Common myeloid progenitor, CD34-positive (primary cell): ENCODE measurements at regions of chr1 and their contacts with region 1.

Region 1: GRCh38 chr1:109790735-109791494 is 27.2 kb upstream of the EPS8L3 start:
- DNase-seq: peak; percentile 94 to 99 (median 98)
- H3K4me3 ChIP-seq: peak overlapping the region in 3 of 7 experiments; percentile 23 to 43 (median 31)
- H3K27ac ChIP-seq: peak overlapping the region; percentile 64 to 95
- H3K4me1 ChIP-seq: peaks cover 23 to 93% (median 83%) of the 10 kb centered on the region in 4 experiments
- H3K27me3 ChIP-seq: no peaks in the 10 kb centered on the region

Region 2: DNA sequence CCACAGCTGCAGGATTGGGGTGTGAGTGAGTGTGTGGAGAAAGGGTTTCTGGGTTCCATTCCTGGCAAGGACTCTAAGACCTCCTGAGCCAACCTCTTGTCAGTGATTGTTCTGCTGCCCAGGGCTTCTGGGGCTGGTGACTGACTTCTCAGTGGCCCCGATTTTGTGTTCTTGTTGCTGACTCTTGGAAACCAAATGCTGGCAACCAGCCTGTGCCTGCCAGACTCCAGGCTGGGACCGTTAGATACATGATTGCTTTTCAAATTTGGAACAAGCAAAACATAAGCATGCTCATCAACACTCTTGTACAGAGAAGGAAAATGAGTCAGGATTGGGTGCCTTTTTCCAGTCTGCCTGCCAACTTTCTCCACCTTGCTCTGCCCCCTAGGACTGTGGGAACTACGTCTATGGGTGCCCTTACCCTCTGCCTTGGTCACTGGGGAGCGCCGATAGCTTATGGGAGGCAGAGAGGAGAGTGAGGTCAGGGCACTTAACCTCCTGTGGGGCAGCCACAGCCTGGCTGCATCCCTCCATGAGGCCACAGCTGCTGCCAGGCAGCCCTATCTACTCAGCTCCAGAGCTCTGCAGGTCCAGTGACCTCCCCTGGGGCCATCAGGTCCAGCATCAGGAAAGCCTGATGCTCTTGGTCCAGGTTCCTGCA is 12.1 kb after region 1 on chr1:
- CTCF ChIA-PET with region 1: interaction called, 37 read pairs
- POLR2A ChIA-PET with region 1: no interaction called
- DNase-seq: no peak
- H3K4me3 ChIP-seq: no peak overlapping the region
- H3K27ac ChIP-seq: no peak overlapping the region
- H3K4me1 ChIP-seq: peaks cover 2 to 48% (median 22%) of the 10 kb centered on the region in 4 experiments
- H3K27me3 ChIP-seq: no peaks in the 10 kb centered on the region

Region 3: DNA sequence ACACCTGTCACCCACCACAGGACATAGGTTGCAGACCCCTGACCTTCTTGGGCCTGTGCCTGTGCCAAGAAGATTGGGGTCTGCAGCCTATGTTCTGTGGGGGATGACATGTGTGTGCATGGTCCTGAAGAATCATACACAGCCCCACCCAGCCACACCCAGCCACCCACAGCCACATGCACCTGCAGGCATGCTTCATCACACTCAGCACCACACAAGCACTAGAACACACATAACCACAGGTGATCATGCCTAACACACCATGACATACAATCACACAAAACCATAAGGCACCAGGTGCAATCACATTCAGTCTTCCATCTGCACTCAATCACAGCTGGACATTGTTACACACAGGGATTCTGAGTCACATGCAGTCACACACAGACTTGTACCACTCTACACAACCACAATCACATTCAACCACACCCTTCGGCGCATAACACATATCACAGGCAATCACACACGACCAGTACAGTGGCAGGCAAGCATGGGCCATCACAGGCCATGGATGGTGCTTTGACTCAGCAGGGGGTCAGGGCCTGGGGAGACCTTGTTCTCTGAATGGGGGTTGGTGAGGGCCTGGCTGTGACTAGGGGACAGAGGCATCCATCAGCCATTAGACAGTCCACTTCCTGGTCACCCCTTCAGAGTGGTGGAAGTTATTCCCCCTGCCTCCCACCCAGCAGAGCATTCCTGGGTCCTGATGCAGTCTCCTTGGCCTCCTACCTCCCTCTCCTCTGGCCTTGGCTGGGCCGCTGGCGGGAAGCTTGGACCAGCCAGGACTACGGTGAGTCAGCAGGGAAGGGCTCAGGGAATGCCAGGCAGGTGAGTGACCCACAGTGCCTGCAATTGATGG is 17.1 kb after region 1 on chr1:
- CTCF ChIA-PET with region 1: interaction called, 37 read pairs
- POLR2A ChIA-PET with region 1: no interaction called
- DNase-seq: no peak
- H3K4me3 ChIP-seq: no peak overlapping the region
- H3K27ac ChIP-seq: no peak overlapping the region
- H3K4me1 ChIP-seq: peaks cover 2 to 48% (median 20%) of the 10 kb centered on the region in 4 experiments
- H3K27me3 ChIP-seq: no peaks in the 10 kb centered on the region

Region 4: GRCh38 chr1:109826930-109827349 is 36.0 kb after region 1 on chr1:
- CTCF ChIA-PET with region 1: interaction called, 14 read pairs
- POLR2A ChIA-PET with region 1: no interaction called
- DNase-seq: peak; percentile 34 to 74 (median 60)
- H3K4me3 ChIP-seq: no peak overlapping the region
- H3K27ac ChIP-seq: no peak overlapping the region
- H3K4me1 ChIP-seq: peaks cover 0 to 14% (median 3%) of the 10 kb centered on the region in 4 experiments
- H3K27me3 ChIP-seq: no peaks in the 10 kb centered on the region

Region 5: GRCh38 chr1:109917768-109918606 is 127.1 kb after region 1 on chr1:
- CTCF ChIA-PET with region 1: interaction called, 20 read pairs
- POLR2A ChIA-PET with region 1: no interaction called
- DNase-seq: no peak
- H3K4me3 ChIP-seq: no peak overlapping the region
- H3K27ac ChIP-seq: peak overlapping the region in 1 of 2 experiments; percentile 44
- H3K4me1 ChIP-seq: peaks cover 0 to 7% (median 1%) of the 10 kb centered on the region in 4 experiments
- H3K27me3 ChIP-seq: peaks cover 0 to 4% (median 0%) of the 10 kb centered on the region in 5 experiments

Region 6: DNA sequence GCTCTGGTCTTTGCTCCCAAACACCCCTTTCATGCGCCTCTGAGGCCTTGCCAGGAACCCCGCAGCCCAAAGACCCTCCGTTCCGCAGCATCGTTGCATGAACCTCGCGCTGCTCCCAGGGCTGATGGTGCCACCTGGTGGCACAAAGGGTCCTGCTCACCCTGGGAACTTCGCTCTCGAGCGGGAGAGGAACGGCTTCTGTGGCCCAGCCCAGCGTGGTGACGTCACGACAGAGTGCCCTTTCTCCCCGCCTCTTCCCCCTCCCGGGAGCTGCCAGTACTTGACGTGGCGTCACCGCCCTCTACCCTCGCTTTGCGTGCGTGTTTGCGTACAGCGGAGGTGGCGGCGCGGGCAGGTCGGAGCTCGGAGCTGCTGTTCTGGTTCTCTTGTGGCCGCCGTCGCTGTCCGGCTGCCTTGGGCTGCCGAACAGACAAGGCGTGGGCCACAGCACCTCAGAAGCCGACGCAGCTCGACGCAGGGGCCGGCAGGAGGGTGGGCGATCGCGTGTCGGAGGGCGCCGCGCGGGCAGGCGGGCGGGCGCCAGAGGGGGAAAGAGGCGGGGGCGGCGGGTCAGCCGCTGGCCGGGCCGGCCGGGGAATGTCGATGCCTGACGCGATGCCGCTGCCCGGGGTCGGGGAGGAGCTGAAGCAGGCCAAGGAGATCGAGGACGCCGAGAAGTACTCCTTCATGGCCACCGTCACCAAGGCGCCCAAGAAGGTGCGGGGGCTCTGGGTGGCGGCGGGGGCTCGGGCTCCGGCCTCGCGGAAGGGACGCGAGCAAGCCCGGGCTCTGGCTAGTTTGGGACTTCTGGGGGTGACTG is 193.8 kb after region 1 on chr1 and contains the start of gene AHCYL1:
- CTCF ChIA-PET with region 1: interaction called, 551 read pairs
- POLR2A ChIA-PET with region 1: interaction called, 13 read pairs
- DNase-seq: peak; percentile 98 to 99 (median 98)
- H3K4me3 ChIP-seq: peak within 1 kb of the TSS; percentile 76 to 90 (median 81)
- H3K27ac ChIP-seq: peak within 1 kb of the TSS; percentile 84 to 91
- H3K4me1 ChIP-seq: peaks cover 9 to 33% (median 17%) of the 10 kb centered on the region in 4 experiments
- H3K27me3 ChIP-seq: no peaks in the 10 kb centered on the region

Region 7: DNA sequence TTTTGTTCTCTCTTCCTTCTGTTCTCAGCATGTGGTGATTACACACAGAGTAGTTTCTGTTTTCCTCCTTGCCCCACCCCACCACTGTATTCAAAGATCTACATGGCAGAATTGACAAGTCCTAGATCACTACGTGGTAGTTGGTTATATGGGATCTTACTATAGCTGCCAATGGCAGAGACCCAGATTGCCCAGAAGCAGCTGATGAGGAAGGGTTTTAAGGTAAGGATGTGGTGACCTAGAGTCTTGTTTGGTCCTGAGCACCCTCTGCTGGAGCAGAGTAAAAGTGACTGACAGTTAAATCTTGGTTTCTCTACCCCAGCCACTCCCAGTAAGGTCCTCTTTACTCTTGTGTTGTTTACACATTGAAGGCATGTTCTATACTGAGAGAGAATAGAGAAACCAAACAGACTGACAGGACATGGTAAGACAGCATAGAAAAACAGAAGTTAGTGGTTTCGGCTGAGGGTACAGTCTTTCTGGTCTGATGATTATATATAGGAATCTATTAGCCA is 220.7 kb after region 1 on chr1:
- CTCF ChIA-PET with region 1: interaction called, 12 read pairs
- POLR2A ChIA-PET with region 1: no interaction called
- DNase-seq: peak; percentile 65 to 82 (median 78)
- H3K4me3 ChIP-seq: no peak overlapping the region
- H3K27ac ChIP-seq: no peak overlapping the region
- H3K4me1 ChIP-seq: no peaks in the 10 kb centered on the region
- H3K27me3 ChIP-seq: no peaks in the 10 kb centered on the region